A673 (cell line): ENCODE measurements at regions of chr3 and their contacts with region 1.

Region 1: GRCh38 chr3:11379233-11379823 is 107.1 kb downstream of the ATG7 start:
- DNase-seq: peak; percentile 65
- H3K4me3 ChIP-seq: no peak overlapping the region
- H3K27ac ChIP-seq: no peak overlapping the region
- H3K4me1 ChIP-seq: peaks cover 7% of the 10 kb centered on the region
- H3K27me3 ChIP-seq: no peaks in the 10 kb centered on the region
- CTCF ChIP-seq: peak; percentile 71

Region 2: DNA sequence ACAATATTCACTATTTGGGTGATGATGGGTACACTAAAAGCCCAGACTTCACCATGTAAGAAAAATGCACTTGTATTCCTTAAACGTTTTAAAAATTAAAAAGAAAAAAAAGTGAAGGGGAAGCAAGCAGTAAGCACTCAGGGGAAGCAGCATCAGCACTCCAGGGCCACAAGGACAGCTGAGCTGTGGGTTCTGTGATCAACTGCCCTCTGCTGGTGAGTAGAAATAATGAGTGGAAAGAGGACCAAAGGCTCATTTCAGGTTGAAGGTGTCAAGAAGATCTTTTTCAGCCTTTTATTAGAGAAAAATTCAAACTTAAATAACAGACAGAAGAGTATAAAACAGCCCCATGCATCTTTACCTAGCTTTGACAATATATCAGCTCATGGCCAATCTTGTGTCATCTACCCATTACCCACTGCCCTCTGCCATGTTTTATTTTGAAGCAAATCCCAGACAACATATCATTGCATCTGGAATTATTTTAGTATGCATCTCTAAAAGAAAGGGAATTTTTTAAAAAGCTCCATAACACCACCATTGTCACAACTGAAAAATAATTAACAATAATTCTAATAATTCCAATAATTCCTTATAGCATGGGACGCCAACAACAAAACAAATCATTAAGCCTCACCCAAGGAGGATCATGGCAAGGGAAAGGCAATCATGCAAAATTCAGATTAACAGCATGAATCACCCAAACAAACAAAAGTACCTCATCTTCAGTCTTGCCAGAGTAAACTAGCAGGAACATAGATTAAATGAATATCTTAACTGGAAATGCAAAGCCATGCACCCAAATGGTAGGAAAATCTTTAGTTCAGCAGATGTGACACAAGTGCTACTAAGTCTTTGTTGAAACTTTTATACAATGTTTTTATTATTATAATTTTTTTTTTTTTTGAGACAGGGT is 424.9 kb after region 1 on chr3:
- CTCF ChIA-PET with region 1: interaction called, 3 read pairs
- POLR2A ChIA-PET with region 1: no interaction called
- intact Hi-C with region 1: loop called (anchors 2 kb)
- DNase-seq: peak; percentile 67
- H3K4me3 ChIP-seq: no peak overlapping the region
- H3K27ac ChIP-seq: no peak overlapping the region
- H3K4me1 ChIP-seq: no peaks in the 10 kb centered on the region
- H3K27me3 ChIP-seq: no peaks in the 10 kb centered on the region
- CTCF ChIP-seq: peak; percentile 82

Region 3: GRCh38 chr3:11835028-11835639 is 455.8 kb after region 1 on chr3:
- CTCF ChIA-PET with region 1: no interaction called
- POLR2A ChIA-PET with region 1: no interaction called
- intact Hi-C with region 1: loop called (anchors 10 kb)
- DNase-seq: peak; percentile 49
- H3K4me3 ChIP-seq: no peak overlapping the region
- H3K27ac ChIP-seq: no peak overlapping the region
- H3K4me1 ChIP-seq: no peaks in the 10 kb centered on the region
- H3K27me3 ChIP-seq: no peaks in the 10 kb centered on the region
- CTCF ChIP-seq: peak; percentile 64